ENCODE measurements at regions of chr17 and their contacts with region 1.

Region 1: GRCh38 chr17:49567871-49568694 is 7.6 kb upstream of the NXPH3 start:
- DNase-seq: peak in 1 of 2 experiments; percentile 96
- H3K4me3 ChIP-seq: peak overlapping the region in 2 of 4 experiments; percentile 11 to 51; a peak in 4 of 8 replicates
- H3K27ac ChIP-seq: no peak overlapping the region
- H3K4me1 ChIP-seq: peaks cover 0 to 9% (median 2%) of the 10 kb centered on the region in 4 experiments; a peak in 3 of 7 replicates
- H3K27me3 ChIP-seq: peaks cover 0 to 5% (median 2%) of the 10 kb centered on the region in 4 experiments; a peak in 4 of 7 replicates
- CTCF ChIP-seq: peak; percentile 87 to 98 (median 90)
- EP300 ChIP-seq: no peak
- POLR2A ChIP-seq: no peak
- RAD21 ChIP-seq: peak; percentile 97 to 99

Region 2: DNA sequence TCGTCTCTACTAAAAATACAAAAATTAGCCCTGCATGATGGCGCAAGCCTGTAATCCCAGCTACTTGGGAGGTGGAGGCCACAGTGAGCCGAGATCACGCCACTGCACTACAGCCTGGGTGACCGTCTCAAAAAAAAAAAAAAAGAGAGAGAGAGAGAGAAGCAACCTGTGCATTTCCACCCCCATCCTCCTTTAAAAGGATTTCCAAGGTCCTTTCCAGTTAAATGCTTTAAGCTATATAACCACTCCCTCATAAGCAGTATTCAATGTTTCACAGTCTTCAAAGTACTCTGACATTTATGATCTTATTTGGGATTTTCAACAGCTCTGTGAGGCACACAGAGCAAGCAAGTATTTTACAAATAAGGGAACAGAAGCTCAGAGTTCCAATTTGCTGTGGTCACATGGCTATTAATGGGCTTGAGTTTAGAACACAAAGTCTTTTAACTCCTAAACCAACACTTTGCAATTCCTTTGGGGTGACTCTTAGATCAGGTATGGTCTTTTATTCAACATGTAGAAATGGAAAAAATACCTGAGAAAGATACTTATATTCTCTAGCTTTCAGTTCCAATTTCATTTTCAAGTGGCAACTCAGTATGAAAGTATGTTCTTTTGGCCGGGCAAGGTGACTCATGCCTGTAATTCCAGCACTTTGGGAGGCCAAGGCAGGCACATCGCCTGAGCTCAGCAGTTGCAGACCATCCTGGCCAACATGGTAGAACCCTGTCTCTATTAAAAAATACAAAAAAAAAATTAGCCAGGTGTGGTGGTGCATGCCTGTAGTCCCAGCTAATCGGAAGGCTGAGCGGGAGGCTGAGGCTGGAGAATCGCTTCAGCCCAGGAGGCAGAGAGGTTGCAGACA is 78.5 kb after region 1 on chr17:
- CTCF ChIA-PET with region 1: no interaction called
- POLR2A ChIA-PET with region 1: no interaction called
- DNase-seq: no peak
- H3K4me3 ChIP-seq: no peak overlapping the region
- H3K27ac ChIP-seq: no peak overlapping the region
- H3K4me1 ChIP-seq: peaks cover 0 to 2% (median under 1%) of the 10 kb centered on the region in 4 experiments; a peak in 4 of 7 replicates
- H3K27me3 ChIP-seq: no peaks in the 10 kb centered on the region
- CTCF ChIP-seq: no peak
- EP300 ChIP-seq: no peak
- POLR2A ChIP-seq: no peak
- RAD21 ChIP-seq: no peak

Region 3: DNA sequence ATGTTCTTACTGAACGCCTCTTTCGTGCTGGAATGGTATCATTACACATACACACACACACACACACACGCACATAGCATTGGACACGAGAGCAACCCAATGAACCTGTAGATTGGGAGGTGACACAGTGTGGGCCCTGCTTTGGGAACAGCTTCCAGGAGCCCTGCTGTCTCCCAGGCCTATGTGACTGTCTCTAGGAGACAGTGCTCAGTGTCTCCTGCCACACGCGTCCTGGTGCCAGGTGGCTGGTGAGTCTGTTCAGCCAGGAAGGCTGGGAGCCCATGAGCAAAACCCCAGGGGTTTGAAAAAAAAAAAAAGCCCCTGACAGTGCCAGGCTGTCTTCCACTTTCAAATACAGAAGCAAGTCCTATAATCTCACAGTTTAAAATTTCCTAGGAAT is 112.2 kb after region 1 on chr17:
- CTCF ChIA-PET with region 1: interaction called, 19 read pairs
- POLR2A ChIA-PET with region 1: interaction called, 3 read pairs
- DNase-seq: no peak
- H3K4me3 ChIP-seq: no peak overlapping the region
- H3K27ac ChIP-seq: no peak overlapping the region
- H3K4me1 ChIP-seq: no peaks in the 10 kb centered on the region; a peak in 1 of 7 replicates
- H3K27me3 ChIP-seq: peaks cover 0 to 2% (median 0%) of the 10 kb centered on the region in 4 experiments; a peak in 2 of 7 replicates
- CTCF ChIP-seq: no peak
- EP300 ChIP-seq: no peak
- POLR2A ChIP-seq: no peak
- RAD21 ChIP-seq: no peak

Region 4: GRCh38 chr17:49687878-49688491 is 119.9 kb after region 1 on chr17:
- CTCF ChIA-PET with region 1: interaction called, 32 read pairs
- POLR2A ChIA-PET with region 1: interaction called, 3 read pairs
- DNase-seq: no peak
- H3K4me3 ChIP-seq: no peak overlapping the region
- H3K27ac ChIP-seq: no peak overlapping the region
- H3K4me1 ChIP-seq: peaks cover 0 to 2% (median 0%) of the 10 kb centered on the region in 4 experiments; a peak in 2 of 7 replicates
- H3K27me3 ChIP-seq: no peaks in the 10 kb centered on the region; a peak in 2 of 7 replicates
- CTCF ChIP-seq: no peak
- EP300 ChIP-seq: no peak
- POLR2A ChIP-seq: no peak
- RAD21 ChIP-seq: no peak

Region 5: GRCh38 chr17:49699966-49700575 is 132.0 kb after region 1 on chr17:
- CTCF ChIA-PET with region 1: interaction called, 310 read pairs
- POLR2A ChIA-PET with region 1: interaction called, 12 read pairs
- DNase-seq: no peak
- H3K4me3 ChIP-seq: no peak overlapping the region
- H3K27ac ChIP-seq: no peak overlapping the region
- H3K4me1 ChIP-seq: peaks cover 0 to 2% (median 0%) of the 10 kb centered on the region in 4 experiments; a peak in 2 of 7 replicates
- H3K27me3 ChIP-seq: no peaks in the 10 kb centered on the region
- CTCF ChIP-seq: no peak
- EP300 ChIP-seq: no peak
- POLR2A ChIP-seq: no peak; a peak in 1 of 3 replicates
- RAD21 ChIP-seq: no peak